ENCODE measurements at regions of chr9 and their contacts with region 1.

Region 1: GRCh38 chr9:88660611-88661010 is 125.6 kb downstream of the NXNL2 start:
- DNase-seq: peak; percentile 50
- H3K4me3 ChIP-seq: no peak overlapping the region
- H3K27ac ChIP-seq: no peak overlapping the region
- H3K4me1 ChIP-seq: peaks cover 9% of the 10 kb centered on the region
- H3K27me3 ChIP-seq: no peaks in the 10 kb centered on the region
- CTCF ChIP-seq: peak; percentile 68 to 72

Region 2: GRCh38 chr9:88339317-88339716 is 321.3 kb before region 1 on chr9:
- CTCF ChIA-PET with region 1: no interaction called
- dilution Hi-C with region 1: no loop called
- in situ Hi-C with region 1: no loop called
- intact Hi-C with region 1: no loop called
- DNase-seq: no peak
- H3K4me3 ChIP-seq: no peak overlapping the region
- H3K27ac ChIP-seq: no peak overlapping the region
- H3K4me1 ChIP-seq: peaks cover 12% of the 10 kb centered on the region
- H3K27me3 ChIP-seq: no peaks in the 10 kb centered on the region
- CTCF ChIP-seq: no peak

Region 3: DNA sequence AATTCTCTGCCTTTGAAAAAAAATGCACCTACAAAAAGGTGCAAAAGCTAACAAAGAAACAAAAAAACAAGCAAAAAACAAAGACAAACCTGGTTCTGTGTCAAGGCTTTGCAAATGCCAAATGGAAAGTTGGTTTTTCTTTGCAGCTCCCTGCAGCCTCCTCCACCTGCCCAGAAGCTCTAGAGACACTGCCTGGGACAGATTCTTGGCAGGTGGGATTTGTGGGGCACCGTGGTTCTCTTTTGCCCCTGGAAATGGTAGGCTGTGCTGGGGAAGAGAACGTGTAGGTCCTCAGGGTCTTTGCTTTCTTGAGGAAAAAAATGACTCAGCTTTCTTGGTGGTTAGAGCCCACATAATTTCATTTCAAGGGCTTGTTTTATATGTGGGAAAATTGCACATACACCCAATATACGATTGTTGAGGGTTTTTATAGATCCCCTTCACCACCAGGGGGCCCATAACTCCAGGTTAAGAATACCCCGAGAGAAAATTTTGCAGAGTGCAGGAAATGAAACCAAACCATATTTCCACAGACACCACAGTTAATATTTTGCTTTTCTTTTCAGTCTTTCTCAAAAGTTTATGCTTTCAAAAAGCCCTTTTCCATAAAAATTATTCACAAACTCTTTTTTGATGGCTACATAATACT is 67.0 kb before region 1 on chr9:
- CTCF ChIA-PET with region 1: no interaction called
- dilution Hi-C with region 1: no loop called
- in situ Hi-C with region 1: no loop called
- intact Hi-C with region 1: loop called (anchors 2 kb)
- DNase-seq: peak; percentile 28
- H3K4me3 ChIP-seq: no peak overlapping the region
- H3K27ac ChIP-seq: no peak overlapping the region
- H3K4me1 ChIP-seq: no peaks in the 10 kb centered on the region
- H3K27me3 ChIP-seq: peaks cover 4% of the 10 kb centered on the region
- CTCF ChIP-seq: peak; percentile 58 to 64

Region 4: DNA sequence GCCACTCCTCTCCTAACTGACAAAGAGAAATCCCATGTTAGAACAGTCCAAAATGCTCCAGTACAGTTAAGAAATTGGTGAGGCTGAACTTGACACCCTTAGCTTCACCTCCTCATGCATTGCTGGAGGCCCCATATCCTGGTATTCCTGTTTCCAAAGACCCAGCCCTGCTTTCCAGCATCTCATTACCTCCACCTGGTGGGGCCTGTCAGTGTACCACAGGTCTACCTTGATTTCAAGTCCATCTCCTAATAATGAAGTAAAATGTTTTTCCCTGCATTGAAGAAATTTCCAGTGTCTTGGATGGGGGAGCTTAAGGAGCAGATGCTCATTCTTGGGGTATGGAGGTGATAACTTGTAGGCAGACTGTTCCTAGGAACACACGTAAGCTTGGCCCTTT is 260.0 kb after region 1 on chr9:
- CTCF ChIA-PET with region 1: no interaction called
- dilution Hi-C with region 1: no loop called
- in situ Hi-C with region 1: no loop called
- intact Hi-C with region 1: loop called (anchors 1 kb)
- DNase-seq: no peak
- H3K4me3 ChIP-seq: no peak overlapping the region
- H3K27ac ChIP-seq: no peak overlapping the region
- H3K4me1 ChIP-seq: no peaks in the 10 kb centered on the region
- H3K27me3 ChIP-seq: no peaks in the 10 kb centered on the region
- CTCF ChIP-seq: peak; percentile 22 to 39